ENCODE measurements at regions of chr9 and their contacts with region 1.

Region 1: GRCh38 chr9:36798350-36799065 is 225.8 kb downstream of the MELK start:
- DNase-seq: peak in 3 of 10 donors; percentile 28 to 44 (median 39)
- H3K4me3 ChIP-seq: peak overlapping the region in 3 of 59 donors; percentile 2 to 20 (median 7)
- H3K27ac ChIP-seq: peak overlapping the region in 58 of 59 donors; percentile 7 to 99 (median 84)
- H3K27me3 ChIP-seq: no peaks in the 10 kb centered on the region
- CTCF ChIP-seq: peak in 52 of 56 donors; percentile 20 to 74 (median 48)

Region 2: GRCh38 chr9:36566813-36567221 is 231.7 kb before region 1 on chr9:
- intact Hi-C with region 1: loop called in 1 of 2 experiments (anchors 10 kb)
- DNase-seq: peak; percentile 58 to 93 (median 85)
- H3K4me3 ChIP-seq: peak overlapping the region in 2 of 59 donors; percentile 3 to 16
- H3K27ac ChIP-seq: peak overlapping the region in 57 of 59 donors; percentile 32 to 90 (median 78)
- H3K27me3 ChIP-seq: no peaks in the 10 kb centered on the region
- CTCF ChIP-seq: peak in 4 of 56 donors; percentile 7 to 24 (median 12)

Region 3: DNA sequence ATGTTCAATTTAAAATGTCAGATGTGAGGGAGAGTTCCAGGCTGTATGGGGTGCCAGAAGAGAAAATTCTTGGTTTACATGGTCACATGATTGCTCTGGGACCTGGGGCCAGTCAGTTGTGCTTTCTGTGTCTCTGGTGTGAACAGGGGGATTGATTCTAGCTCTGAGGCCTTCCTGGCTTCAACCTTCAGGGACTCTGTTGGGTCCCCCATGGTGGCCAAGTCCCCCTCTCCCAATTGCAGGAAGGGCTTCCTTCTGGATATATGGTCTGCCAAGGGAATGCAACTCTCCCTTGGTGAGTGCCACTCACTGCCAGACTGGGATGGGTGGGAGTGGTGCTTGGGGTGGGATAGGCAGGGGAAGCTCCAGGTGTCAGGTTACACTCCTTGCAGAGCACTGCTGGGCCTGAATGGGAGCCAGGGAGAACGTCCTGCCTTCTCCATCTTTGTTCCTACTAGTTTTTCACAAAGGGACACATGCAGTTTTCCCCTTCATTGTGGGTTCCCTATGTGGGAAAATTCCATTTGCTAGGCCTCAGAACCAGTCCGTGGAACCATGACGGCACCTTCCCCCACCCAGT is 72.6 kb before region 1 on chr9:
- intact Hi-C with region 1: no loop called
- DNase-seq: no peak
- H3K4me3 ChIP-seq: no peak overlapping the region
- H3K27ac ChIP-seq: no peak overlapping the region
- H3K27me3 ChIP-seq: peaks cover 0 to 6% (median 0%) of the 10 kb centered on the region in 45 donors
- CTCF ChIP-seq: no peak

Region 4: DNA sequence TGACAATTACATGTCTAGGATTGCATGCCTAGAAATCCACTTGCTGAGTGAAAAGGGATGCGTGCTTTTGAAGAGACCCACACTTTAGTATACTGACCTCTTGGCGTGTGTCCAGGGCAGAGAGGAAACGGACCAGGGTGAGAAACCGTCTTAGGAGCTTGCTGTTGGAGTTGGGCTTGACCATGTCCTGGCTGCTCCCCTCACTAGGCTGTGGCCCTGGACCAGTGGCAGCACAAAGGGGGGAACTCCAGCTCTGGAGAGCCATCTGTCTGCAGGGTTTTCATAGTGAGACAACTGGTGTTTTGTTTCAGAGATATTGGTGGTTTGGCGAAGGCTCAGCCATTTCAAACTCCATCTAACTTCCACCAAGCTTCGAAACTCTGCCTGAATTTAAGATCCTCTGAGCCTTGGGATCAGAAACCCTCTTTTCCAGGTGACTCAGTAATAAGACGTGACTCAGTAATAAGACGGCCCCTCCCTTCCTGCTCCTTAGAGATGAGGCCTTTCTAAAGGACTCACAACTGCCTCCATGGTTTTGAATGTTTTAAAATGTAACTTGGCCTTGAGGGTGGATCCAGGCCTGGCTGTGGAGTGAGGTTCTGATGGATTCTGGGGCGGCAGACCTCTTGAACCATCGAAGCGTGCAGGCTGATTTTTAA is 60.1 kb before region 1 on chr9:
- intact Hi-C with region 1: no loop called
- DNase-seq: no peak
- H3K4me3 ChIP-seq: no peak overlapping the region
- H3K27ac ChIP-seq: no peak overlapping the region
- H3K27me3 ChIP-seq: peaks cover 0 to 56% (median 16%) of the 10 kb centered on the region in 45 donors
- CTCF ChIP-seq: no peak

Region 5: DNA sequence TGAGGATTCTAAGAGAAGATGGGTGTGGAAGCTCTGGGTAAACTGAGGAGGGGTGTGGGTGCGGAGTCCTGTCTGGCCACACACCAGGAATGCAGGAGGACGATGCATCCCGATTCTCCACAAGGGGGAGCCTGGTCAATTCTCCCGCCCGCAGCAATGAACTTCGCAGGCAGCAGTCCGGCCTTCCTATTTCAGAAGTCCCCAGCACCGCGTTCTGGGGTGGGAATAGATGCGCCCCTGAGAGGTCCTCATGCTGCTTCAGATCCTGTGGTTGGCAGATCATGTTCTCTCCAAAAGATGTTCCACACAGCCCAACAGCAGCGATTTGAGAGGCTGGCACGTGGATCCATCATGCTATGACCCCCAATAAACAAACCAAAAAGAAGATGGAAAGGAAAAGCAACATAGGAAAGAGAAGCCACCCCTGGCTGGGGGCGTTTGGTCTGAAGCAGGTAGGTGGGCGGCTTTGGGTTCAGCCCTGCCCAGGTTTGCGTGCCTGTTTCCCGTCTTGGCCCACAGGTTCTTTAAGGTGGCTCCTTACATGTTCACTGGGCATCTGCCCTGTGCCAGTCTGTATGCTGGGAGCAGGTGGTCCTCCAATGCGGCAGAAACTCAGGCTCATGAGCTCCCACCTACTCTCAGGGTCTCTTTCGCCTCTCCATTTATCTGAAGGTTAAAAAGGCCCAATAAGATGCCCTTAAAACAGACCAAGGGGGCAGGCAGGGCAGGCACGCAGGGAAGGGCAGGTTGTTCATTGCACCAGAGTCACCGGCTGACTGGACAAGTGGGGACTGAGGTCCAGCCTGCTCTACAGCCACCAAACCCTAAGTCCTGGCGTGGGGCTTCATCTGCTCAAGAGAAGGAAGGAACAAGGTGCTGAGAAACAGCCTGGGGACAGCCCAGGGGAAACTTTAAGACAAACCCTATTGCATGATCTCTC is 64.0 kb after region 1 on chr9:
- intact Hi-C with region 1: loop called in 1 of 2 experiments (anchors 5 kb)
- DNase-seq: peak in 8 of 10 donors; percentile 39 to 73 (median 54)
- H3K4me3 ChIP-seq: no peak overlapping the region
- H3K27ac ChIP-seq: no peak overlapping the region
- H3K27me3 ChIP-seq: peaks cover 0 to 12% (median 0%) of the 10 kb centered on the region in 45 donors
- CTCF ChIP-seq: peak; percentile 33 to 76 (median 64)

Region 6: DNA sequence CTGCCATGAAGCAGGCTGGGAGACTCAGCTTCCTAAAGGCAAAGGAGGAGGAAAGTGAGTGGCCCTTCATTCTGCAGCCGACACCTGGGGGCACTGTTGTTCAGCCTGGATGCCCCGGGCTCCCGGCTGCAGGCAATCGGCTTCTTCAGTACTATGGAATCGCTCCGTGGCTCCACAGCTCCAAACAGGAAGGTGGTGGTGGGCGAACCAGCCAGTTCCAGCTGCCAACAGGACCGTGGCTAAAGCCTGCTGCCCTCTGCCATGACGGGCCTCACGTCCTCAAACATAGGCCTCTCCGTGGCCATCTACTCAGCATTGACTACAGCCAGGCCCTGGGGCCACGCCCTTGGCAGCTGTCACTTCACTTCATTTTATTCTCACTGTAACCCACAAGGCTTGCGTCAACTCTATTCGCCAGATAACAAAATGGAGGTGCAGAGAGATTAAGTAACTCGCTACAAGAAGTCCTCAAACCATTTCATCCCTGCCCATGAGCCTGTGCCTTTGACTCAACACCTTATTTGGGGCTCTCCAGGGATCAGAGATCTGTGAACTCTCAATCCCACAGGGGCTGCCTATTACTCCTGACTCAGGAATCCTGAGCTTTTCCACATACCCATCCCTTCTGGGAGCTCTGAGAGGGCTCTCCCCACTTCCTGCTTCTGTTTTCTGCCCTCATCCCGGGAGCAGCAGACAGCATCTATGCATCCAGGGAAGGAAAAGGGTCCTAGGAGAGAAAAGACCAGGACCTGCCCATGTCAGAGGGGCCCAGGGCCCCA is 197.6 kb after region 1 on chr9:
- intact Hi-C with region 1: loop called (anchors 10 kb)
- DNase-seq: peak in 4 of 10 donors; percentile 12 to 57 (median 44)
- H3K4me3 ChIP-seq: peak overlapping the region in 1 of 59 donors; percentile 17
- H3K27ac ChIP-seq: no peak overlapping the region
- H3K27me3 ChIP-seq: peaks cover 0 to 54% (median 21%) of the 10 kb centered on the region in 45 donors
- CTCF ChIP-seq: peak in 50 of 56 donors; percentile 16 to 62 (median 40)

Region 7: GRCh38 chr9:37329576-37329975 is 531.1 kb after region 1 on chr9:
- intact Hi-C with region 1: loop called in 1 of 2 experiments (anchors 10 kb)
- DNase-seq: no peak
- H3K4me3 ChIP-seq: no peak overlapping the region
- H3K27ac ChIP-seq: no peak overlapping the region
- H3K27me3 ChIP-seq: no peaks in the 10 kb centered on the region
- CTCF ChIP-seq: peak in 45 of 56 donors; percentile 18 to 64 (median 37)